Activated T-helper 1 cell treated with anti-CD3 and anti-CD28 coated beads, Interleukin-12 subunit alpha, Interleukin-12 subunit beta, Interleukin-2, Interleukin-4 antibody, amounts not matched to agents 30 ng/mL and 10 ng/mL and 1 ng/mL, durations not matched to agents 14 hours and 24 hours and 36 hours (primary cell): ENCODE measurements at regions of chr3 and their contacts with region 1.

Region 1: DNA sequence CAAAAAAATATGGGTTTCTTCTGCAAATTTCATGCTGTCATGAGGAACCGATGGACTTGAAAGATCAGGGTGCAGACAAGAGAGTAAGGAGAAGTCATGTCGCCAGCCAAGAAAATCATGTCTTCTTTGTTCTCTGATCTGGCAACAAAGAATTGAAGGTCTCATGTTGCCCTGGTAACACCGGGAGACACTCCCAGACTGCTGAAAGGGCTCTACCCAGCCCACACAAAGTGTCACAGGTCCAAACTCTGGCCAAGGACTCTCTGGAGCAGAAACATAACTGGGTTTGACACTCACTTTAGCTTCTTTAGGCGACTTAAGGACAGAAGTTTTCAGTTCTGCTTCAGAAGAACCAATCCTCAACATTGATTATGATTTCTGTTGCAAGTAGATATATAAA is 42.9 kb downstream of the SIDT1 start:
- DNase-seq: no peak
- H3K4me3 Mint-ChIP-seq: no peak overlapping the region
- H3K27ac Mint-ChIP-seq: no peak overlapping the region
- H3K4me1 Mint-ChIP-seq: peaks cover 5% of the 10 kb centered on the region
- H3K27me3 Mint-ChIP-seq: no peaks in the 10 kb centered on the region

Region 2: DNA sequence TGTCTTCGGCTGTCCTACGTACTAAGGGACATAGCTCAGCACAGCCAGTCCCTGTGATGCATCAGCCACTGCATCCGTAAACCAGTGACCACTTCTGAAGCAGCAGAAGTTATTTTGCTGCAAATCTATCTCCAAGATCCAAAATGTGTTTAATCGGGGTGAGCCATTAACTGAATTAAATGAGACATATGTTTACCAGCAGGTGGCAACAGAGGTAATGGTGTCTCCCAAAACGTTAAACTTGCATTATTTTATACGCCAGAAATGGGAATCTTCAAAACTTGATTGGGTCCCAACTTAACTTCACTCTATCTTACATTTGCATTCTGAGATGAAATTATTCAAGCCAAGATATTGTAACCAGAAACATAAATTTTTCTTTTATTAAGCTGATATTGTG is 439.1 kb before region 1 on chr3:
- intact Hi-C with region 1: loop called (anchors 5 kb)
- DNase-seq: no peak
- H3K4me3 Mint-ChIP-seq: no peak overlapping the region
- H3K27ac Mint-ChIP-seq: no peak overlapping the region
- H3K4me1 Mint-ChIP-seq: peaks cover 2% of the 10 kb centered on the region
- H3K27me3 Mint-ChIP-seq: no peaks in the 10 kb centered on the region

Region 3: DNA sequence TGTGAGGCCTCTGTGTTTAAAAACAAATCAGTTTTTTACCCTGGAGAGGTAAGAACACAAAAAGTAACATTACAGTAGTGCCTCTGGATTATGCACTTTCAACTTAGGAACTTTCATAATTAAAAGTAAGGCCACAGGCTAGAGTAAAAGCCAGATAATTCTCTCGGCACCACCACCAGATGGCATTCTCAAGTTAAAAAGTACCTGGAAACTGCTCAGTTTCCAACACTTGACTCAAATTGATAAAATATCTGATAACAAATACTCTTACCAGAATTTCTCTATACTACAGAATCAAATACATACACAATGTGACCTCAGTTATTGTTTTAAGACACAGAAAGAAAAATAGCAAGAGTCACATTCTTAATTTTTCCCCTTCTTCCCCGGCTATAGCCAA is 80.2 kb before region 1 on chr3:
- intact Hi-C with region 1: loop called (anchors 1 kb)
- DNase-seq: no peak
- H3K4me3 Mint-ChIP-seq: no peak overlapping the region
- H3K27ac Mint-ChIP-seq: no peak overlapping the region
- H3K4me1 Mint-ChIP-seq: no peaks in the 10 kb centered on the region
- H3K27me3 Mint-ChIP-seq: no peaks in the 10 kb centered on the region

Region 4: DNA sequence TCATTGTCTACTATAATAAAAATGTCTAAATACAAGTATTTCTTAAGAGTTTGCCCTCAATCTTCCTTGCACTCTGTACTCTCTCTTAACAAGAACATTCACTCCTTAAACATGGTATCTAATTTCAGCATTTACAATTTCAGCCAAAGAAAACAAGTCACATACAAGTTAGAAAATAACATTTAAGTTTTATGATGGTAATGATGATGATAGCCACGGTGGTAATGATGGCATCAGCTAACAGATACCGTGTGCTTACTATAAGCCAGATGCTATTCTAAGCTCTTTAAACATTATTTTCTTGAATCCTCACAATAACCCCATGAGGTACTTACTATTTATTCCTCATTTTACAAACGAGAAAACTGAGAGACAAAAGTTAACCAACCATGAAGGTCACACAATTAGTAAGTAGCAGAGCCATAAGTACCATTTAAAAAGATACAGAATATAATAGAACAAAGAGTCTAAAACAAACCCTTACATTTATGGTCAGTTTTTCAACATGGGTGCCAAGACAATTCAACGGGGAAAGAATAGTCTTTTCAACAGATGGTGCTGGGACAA is 67.6 kb before region 1 on chr3:
- intact Hi-C with region 1: no loop called
- DNase-seq: no peak
- H3K4me3 Mint-ChIP-seq: no peak overlapping the region
- H3K27ac Mint-ChIP-seq: no peak overlapping the region
- H3K4me1 Mint-ChIP-seq: no peaks in the 10 kb centered on the region
- H3K27me3 Mint-ChIP-seq: no peaks in the 10 kb centered on the region

Region 5: DNA sequence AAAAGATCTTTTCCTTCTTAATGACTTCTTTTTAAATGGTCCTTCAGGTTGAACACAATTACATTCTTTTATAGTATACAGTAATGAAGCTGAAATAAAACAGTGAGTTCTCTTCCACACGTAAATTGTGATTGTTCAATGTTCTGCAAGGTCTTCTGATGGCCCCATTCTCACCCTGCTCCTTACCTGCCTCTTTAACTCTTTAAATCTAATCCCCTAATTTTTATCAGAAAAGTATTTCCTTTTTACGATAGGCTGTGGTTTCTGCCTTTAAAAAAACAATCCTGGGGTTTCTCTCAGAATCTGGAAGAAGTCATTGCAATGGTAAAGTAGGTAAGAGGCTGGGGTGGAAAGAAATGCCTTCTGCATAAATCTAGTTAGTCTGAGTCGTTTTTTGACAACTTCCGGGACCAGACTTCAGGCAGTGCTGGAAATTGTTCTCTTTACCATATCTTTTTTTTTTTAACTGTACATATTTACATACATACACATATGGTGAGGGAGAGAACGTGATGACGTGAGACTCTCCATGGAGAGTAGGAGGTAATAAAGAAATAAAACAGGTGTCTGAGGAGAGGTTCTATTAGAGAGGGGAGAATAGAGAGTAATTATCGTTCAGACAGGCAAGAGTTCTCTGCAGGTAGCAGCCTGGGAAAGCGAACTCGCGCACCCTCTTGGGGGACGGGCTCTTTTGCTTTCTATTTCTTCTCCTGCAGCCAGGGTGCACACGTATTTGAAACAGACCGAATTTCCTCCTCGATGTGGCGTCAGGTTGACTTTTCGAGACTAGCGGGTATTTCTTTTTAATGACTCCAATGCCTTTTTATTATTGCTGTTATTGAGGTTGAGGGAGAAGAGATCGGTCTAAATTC is 43.1 kb before region 1 on chr3 and contains the start of gene SIDT1:
- intact Hi-C with region 1: loop called (anchors 1 kb)
- DNase-seq: peak; percentile 64
- H3K4me3 Mint-ChIP-seq: peak within 1 kb of the TSS; percentile 100
- H3K27ac Mint-ChIP-seq: peak within 1 kb of the TSS; percentile 99
- H3K4me1 Mint-ChIP-seq: peaks cover 55% of the 10 kb centered on the region
- H3K27me3 Mint-ChIP-seq: peaks cover 10% of the 10 kb centered on the region
- total RNA-seq, gene SIDT1: 11.3 and 12.2 TPM in 2 replicates

Region 6: GRCh38 chr3:113626503-113627371 is 51.5 kb after region 1 on chr3:
- intact Hi-C with region 1: loop called (anchors 2 kb)
- DNase-seq: no peak
- H3K4me3 Mint-ChIP-seq: no peak overlapping the region
- H3K27ac Mint-ChIP-seq: no peak overlapping the region
- H3K4me1 Mint-ChIP-seq: peaks cover 6% of the 10 kb centered on the region
- H3K27me3 Mint-ChIP-seq: no peaks in the 10 kb centered on the region